ENCODE measurements at regions of chr22 and their contacts with region 1.

Region 1: GRCh38 chr22:17095538-17095937 is 10.7 kb downstream of the IL17RA start:
- DNase-seq: peak in 3 of 4 experiments; percentile 31 to 57 (median 57)
- ATAC-seq: peak; percentile 77
- H3K4me3 ChIP-seq: no peak overlapping the region
- H3K27ac ChIP-seq: no peak overlapping the region
- H3K4me1 ChIP-seq: peaks cover 5 to 8% of the 10 kb centered on the region in 2 experiments; a peak in 4 of 5 replicates
- H3K27me3 ChIP-seq: no peaks in the 10 kb centered on the region
- CTCF ChIP-seq: peak; percentile 37 to 51 (median 42); a peak in 3 of 6 replicates
- EP300 ChIP-seq: no peak
- POLR2A ChIP-seq: no peak
- RAD21 ChIP-seq: no peak

Region 2: GRCh38 chr22:16810188-16810802 is 285.2 kb before region 1 on chr22:
- CTCF ChIA-PET with region 1: no interaction called
- POLR2A ChIA-PET with region 1: no interaction called
- in situ Hi-C with region 1: no loop called
- intact Hi-C with region 1: no loop called
- DNase-seq: peak in 1 of 4 experiments; percentile 49
- ATAC-seq: peak; percentile 37
- H3K4me3 ChIP-seq: no peak overlapping the region
- H3K27ac ChIP-seq: no peak overlapping the region
- H3K4me1 ChIP-seq: no peaks in the 10 kb centered on the region
- H3K27me3 ChIP-seq: no peaks in the 10 kb centered on the region
- CTCF ChIP-seq: no peak
- EP300 ChIP-seq: peak; percentile 25; the same call in 1 of the 2 replicates
- POLR2A ChIP-seq: no peak
- RAD21 ChIP-seq: no peak

Region 3: GRCh38 chr22:17108717-17109518 is 13.4 kb after region 1 on chr22:
- CTCF ChIA-PET with region 1: no interaction called
- POLR2A ChIA-PET with region 1: interaction called, 18 read pairs
- in situ Hi-C with region 1: no loop called
- intact Hi-C with region 1: no loop called
- DNase-seq: no peak
- ATAC-seq: no peak
- H3K4me3 ChIP-seq: no peak overlapping the region
- H3K27ac ChIP-seq: no peak overlapping the region
- H3K4me1 ChIP-seq: peaks cover 0 to 4% of the 10 kb centered on the region in 2 experiments; a peak in 1 of 5 replicates
- H3K27me3 ChIP-seq: peaks cover 0 to 9% of the 10 kb centered on the region in 2 experiments; a peak in 3 of 5 replicates
- CTCF ChIP-seq: no peak
- EP300 ChIP-seq: no peak
- POLR2A ChIP-seq: no peak
- RAD21 ChIP-seq: no peak

Measured in K562 (cell line).